ENCODE measurements at regions of chr18 and their contacts with region 1.

Region 1: GRCh38 chr18:8988261-8988871 is 114.1 kb upstream of the NDUFV2 start:
- DNase-seq: peak; percentile 35 to 75 (median 64)
- ATAC-seq: peak; percentile 84 to 85
- H3K4me3 ChIP-seq: no peak overlapping the region
- H3K27ac ChIP-seq: no peak overlapping the region
- H3K4me1 ChIP-seq: no peaks in the 10 kb centered on the region
- H3K27me3 ChIP-seq: no peaks in the 10 kb centered on the region

Region 2: DNA sequence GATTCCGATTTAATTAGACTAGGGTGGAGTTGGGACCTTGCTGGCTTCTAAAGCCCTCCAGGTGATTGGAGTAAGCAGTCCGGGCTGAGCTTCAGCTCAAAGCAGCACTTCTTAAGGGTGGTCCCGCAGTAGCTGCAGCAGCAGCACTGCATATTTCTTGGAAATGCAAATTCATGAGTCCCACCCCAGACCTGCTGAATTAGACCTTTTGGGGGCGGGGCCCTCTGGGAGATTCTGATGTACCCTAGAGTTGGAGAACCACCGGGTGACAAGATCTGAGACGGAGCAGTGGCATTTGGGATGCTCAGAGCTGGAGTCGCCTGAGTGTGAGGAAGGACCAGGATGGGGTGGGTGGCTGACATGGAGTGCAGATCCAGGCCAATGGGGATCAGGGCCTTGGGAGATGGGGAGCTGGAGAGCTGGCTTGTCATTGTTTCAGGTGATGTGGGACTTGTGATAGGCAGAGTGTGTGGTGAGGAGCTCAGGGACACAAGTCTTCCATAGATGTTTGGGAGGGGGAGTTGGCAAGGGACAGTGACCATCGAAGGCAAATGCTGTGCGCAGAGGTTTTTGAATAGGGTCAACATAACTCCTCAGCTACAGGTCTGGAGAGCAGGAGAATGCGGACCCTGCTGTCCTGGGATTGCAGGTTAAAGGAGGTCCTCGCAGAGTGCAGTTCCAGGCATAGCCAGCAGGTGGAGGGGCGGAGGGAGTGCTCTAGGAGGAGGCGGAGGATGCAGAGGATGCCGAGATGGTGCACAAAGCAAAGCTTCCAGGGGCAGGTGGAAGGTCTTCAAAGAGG is 510.0 kb before region 1 on chr18:
- intact Hi-C with region 1: loop called in 1 of 4 experiments (anchors 10 kb)
- DNase-seq: peak; percentile 56 to 80 (median 80)
- ATAC-seq: peak; percentile 50 to 69
- H3K4me3 ChIP-seq: no peak overlapping the region
- H3K27ac ChIP-seq: no peak overlapping the region
- H3K4me1 ChIP-seq: no peaks in the 10 kb centered on the region
- H3K27me3 ChIP-seq: no peaks in the 10 kb centered on the region

Region 3: DNA sequence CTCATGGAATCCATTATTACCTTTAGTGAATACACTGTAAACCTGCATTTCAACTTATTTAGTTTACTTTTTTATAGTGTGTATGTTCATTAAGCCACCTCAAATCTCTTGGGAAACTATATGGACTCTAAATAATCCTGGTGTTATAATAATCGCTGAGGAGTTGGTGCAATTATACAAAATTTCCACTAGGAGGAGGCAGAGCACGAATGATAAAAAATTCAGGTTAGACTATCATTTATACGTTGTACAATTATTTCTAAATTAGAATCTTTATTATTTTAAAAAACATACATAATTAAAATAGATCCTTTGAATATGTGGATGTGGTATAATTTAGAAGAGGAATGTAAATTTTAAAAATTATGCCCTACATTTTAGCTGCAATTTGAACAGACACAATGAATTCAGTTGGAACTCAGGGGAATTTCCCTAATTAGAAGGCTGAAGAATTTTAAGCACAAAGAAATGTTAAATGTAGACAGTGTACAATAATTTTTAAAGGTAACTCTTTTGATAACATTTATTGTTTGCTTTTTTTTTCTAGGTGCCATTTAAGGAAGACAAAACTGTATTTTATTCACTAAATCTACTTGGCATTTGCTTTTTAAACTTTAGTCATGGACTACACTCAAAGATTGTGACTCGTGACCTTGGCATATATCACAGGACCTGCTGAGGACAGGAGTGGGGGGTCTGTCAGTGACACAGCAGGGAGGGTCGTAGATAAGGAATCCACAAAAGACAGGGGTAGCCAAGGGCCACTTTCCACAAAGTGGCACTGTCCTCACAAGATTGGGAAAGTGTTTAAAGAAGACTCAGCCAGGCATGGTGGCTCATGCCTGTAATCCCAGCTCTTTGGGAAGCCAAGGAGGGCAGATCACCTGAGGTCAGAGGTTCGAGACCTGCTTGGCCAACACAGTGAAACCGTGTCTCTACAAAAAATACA is 333.6 kb before region 1 on chr18:
- intact Hi-C with region 1: loop called (anchors 2 to 10 kb)
- DNase-seq: no peak
- ATAC-seq: peak in 1 of 2 donors; percentile 16
- H3K4me3 ChIP-seq: no peak overlapping the region
- H3K27ac ChIP-seq: no peak overlapping the region
- H3K4me1 ChIP-seq: no peaks in the 10 kb centered on the region
- H3K27me3 ChIP-seq: no peaks in the 10 kb centered on the region

Region 4: DNA sequence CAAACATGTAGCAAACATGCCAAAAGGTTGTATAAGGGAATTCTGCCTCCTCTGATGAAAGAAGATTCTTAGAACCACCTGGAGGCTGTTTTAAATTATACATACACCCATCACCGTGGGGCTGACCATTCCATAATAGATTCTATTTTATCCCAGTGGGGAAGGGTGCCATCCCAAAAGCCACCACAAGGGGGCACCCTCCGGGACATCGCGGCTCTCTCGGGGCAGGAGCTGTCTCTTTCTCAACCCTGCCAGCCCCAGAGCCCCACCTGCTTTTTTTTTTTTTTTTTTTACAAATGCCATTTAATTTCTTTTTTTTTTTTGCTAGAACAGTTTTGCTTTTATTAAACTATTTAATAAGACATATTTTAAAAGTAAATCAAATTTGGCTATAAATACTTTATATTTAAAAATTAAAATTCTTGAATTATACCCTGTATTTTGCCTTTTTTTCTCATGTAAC is 291.6 kb before region 1 on chr18:
- intact Hi-C with region 1: loop called (anchors 5 to 10 kb)
- DNase-seq: peak; percentile 70 to 89 (median 86)
- ATAC-seq: peak; percentile 89 to 93
- H3K4me3 ChIP-seq: no peak overlapping the region
- H3K27ac ChIP-seq: no peak overlapping the region
- H3K4me1 ChIP-seq: no peaks in the 10 kb centered on the region
- H3K27me3 ChIP-seq: no peaks in the 10 kb centered on the region

Region 5: GRCh38 chr18:8780227-8780626 is 208.1 kb before region 1 on chr18:
- intact Hi-C with region 1: no loop called
- DNase-seq: no peak
- ATAC-seq: no peak
- H3K4me3 ChIP-seq: no peak overlapping the region
- H3K27ac ChIP-seq: no peak overlapping the region
- H3K4me1 ChIP-seq: no peaks in the 10 kb centered on the region
- H3K27me3 ChIP-seq: no peaks in the 10 kb centered on the region

Region 6: DNA sequence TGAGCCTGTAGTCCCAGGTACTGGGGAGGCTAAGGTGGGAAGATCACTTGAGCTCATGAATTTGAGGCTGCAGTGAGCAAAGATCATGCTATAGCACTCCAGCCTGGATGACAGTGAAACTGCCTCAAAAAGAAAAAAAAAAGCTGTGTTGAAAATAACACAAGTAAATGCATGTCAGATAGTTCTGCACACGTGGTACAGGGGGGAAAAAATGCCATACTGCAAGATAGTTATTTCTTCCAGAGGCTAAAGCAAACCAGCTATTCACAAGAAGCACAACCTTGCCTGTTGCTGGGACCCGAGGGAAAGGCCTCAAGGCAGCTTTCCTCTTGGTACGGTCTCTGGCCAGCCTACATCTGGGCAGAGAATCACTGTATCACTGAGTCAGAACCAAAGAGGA is 65.7 kb before region 1 on chr18:
- intact Hi-C with region 1: no loop called
- DNase-seq: no peak
- ATAC-seq: no peak
- H3K4me3 ChIP-seq: no peak overlapping the region
- H3K27ac ChIP-seq: no peak overlapping the region
- H3K4me1 ChIP-seq: no peaks in the 10 kb centered on the region
- H3K27me3 ChIP-seq: no peaks in the 10 kb centered on the region

Region 7: GRCh38 chr18:9173770-9174233 is 185.4 kb after region 1 on chr18:
- intact Hi-C with region 1: no loop called
- DNase-seq: no peak
- ATAC-seq: peak; percentile 11 to 20
- H3K4me3 ChIP-seq: no peak overlapping the region
- H3K27ac ChIP-seq: no peak overlapping the region
- H3K4me1 ChIP-seq: peaks cover 14% of the 10 kb centered on the region
- H3K27me3 ChIP-seq: no peaks in the 10 kb centered on the region

Measured in right cardiac atrium (tissue), 5 donors.